ENCODE measurements at regions of chr2 and their contacts with region 1.

Region 1: GRCh38 chr2:24084386-24085361 is at the start of gene TP53I3:
- DNase-seq: peak; percentile 89 to 92
- H3K4me3 ChIP-seq: peak within 1 kb of the TSS; percentile 61 to 64
- H3K27ac ChIP-seq: peak within 1 kb of the TSS; percentile 83 to 93
- H3K4me1 ChIP-seq: peaks cover 0 to 17% (median 15%) of the 10 kb centered on the region in 4 donors
- H3K27me3 ChIP-seq: no peaks in the 10 kb centered on the region
- CTCF ChIP-seq: peak; percentile 94 to 98

Region 2: GRCh38 chr2:23824777-23825212 is 259.9 kb before region 1 on chr2:
- intact Hi-C with region 1: loop called (anchors 5 kb)
- DNase-seq: no peak
- H3K4me3 ChIP-seq: no peak overlapping the region
- H3K27ac ChIP-seq: no peak overlapping the region
- H3K4me1 ChIP-seq: no peaks in the 10 kb centered on the region
- H3K27me3 ChIP-seq: no peaks in the 10 kb centered on the region
- CTCF ChIP-seq: peak; percentile 58 to 69

Region 3: DNA sequence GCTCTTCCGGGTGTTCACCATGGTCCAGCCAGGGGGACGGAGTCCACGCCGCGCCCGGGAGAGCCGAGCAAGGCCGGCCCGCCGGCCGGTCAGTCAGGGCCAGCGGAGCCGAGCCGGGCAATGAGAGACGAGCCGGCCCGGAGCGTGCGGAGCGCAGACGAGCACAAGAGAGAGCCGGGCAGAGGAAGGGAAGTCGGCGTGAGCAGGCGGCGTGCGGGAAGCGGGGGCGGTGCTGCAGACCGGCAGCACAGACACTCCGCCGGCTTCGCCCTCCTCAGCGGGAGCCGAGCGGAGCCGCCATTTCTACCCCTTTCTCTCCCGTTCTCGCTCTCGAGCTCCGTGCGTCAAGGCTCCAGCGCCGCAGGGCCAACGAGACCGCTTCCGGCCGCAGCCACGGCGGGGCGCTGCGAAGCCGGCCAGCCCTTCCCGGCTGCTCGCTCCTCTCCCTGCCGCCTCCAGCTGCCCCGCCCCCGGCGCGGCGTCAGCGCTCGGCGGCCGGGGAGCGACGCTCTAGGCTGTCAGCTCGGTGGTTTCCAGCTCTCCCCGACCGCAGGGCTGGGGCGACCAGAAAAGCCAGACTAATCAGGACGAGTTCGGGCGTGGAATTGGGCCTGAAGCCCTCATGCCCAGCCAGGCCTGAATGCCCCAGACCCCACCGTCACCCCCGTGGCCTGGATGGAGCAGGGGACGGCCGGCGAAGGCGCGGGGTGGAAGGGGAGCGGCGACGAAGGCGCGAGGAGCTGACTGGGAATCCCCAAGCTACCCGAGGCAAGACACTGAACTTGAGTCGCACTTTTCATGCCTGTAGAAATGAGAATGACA is 157.7 kb before region 1 on chr2 and contains the start of gene ATAD2B:
- intact Hi-C with region 1: loop called (anchors 5 kb)
- DNase-seq: peak; percentile 85 to 95
- H3K4me3 ChIP-seq: peak within 1 kb of the TSS; percentile 71 to 94
- H3K27ac ChIP-seq: peak within 1 kb of the TSS; percentile 89 to 99
- H3K4me1 ChIP-seq: peaks cover 0 to 35% (median 18%) of the 10 kb centered on the region in 4 donors
- H3K27me3 ChIP-seq: no peaks in the 10 kb centered on the region
- CTCF ChIP-seq: peak; percentile 84 to 85

Region 4: GRCh38 chr2:24046930-24047702 is 37.6 kb before region 1 on chr2 and contains the start of gene WDCP:
- intact Hi-C with region 1: loop called (anchors 5 kb)
- DNase-seq: peak; percentile 98 to 99
- H3K4me3 ChIP-seq: peak within 1 kb of the TSS; percentile 75 to 86
- H3K27ac ChIP-seq: peak within 1 kb of the TSS; percentile 84
- H3K4me1 ChIP-seq: peaks cover 0 to 42% (median 22%) of the 10 kb centered on the region in 4 donors
- H3K27me3 ChIP-seq: no peaks in the 10 kb centered on the region
- CTCF ChIP-seq: no peak

Measured in tibial artery (tissue), 4 donors.